GM12878 (cell line): ENCODE measurements at regions of chr12 and their contacts with region 1.

Region 1: GRCh38 chr12:89451841-89452251 is 72.8 kb downstream of the GALNT4 start:
- DNase-seq: no peak
- ATAC-seq: no peak
- H3K4me3 ChIP-seq: no peak overlapping the region
- H3K27ac ChIP-seq: no peak overlapping the region
- H3K4me1 ChIP-seq: no peaks in the 10 kb centered on the region
- H3K27me3 ChIP-seq: no peaks in the 10 kb centered on the region
- CTCF ChIP-seq: no peak
- EP300 ChIP-seq: no peak
- POLR2A ChIP-seq: no peak
- RAD21 ChIP-seq: no peak

Region 2: DNA sequence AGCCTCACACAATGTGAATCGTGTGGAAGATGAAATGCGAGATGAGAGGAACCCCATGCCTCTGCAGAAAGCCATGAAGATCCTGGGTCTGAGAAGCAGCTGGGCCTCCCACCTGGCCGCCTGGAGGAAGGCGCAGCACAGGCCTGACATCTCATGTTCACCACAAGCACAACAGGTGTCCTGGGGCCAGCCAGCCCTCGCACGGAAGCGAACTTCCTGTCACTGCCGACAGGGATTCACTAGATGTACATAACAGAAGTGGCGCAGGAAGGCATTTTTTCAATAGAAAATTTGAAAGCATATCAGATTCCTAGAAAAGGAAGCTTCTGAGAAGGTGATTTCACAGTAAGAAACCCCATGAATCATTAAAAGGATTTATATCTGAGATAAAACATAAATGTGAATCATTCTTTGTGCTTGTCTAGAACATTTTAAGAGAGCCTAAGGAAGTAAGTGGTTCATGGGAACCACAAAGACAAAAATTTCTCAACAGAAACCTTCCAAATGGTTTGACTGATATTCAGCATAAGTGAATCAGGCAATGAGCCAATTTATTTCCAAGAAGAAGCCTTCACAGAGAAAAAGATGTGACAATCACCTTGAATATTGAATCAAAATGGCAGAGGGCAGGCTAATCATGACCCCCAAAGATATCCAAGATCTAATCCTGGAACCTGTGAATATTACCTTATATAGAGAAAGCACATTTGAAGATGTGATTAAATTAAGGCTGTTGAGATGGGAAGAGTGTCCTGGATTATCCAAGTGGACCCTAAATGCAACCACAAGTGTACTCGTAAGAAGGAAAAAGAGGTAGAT is 411.5 kb before region 1 on chr12:
- CTCF ChIA-PET with region 1: no interaction called
- POLR2A ChIA-PET with region 1: no interaction called
- RAD21 ChIA-PET with region 1: no interaction called
- SMC1A ChIA-PET with region 1: no interaction called
- in situ Hi-C with region 1: loop called (anchors 10 kb)
- intact Hi-C with region 1: no loop called
- DNase-seq: no peak
- ATAC-seq: peak; percentile 67
- H3K4me3 ChIP-seq: no peak overlapping the region
- H3K27ac ChIP-seq: no peak overlapping the region
- H3K4me1 ChIP-seq: peaks cover 2% of the 10 kb centered on the region
- H3K27me3 ChIP-seq: 0 out of 4 replicates have a peak, but pooled peaks cover 0 to under 1% of the 10 kb centered on the region in 2 experiments
- CTCF ChIP-seq: peak in 1 of 3 experiments; percentile 7; a peak in 1 of 6 replicates
- EP300 ChIP-seq: no peak
- POLR2A ChIP-seq: no peak
- RAD21 ChIP-seq: peak; percentile 35; the same call in 1 of the 2 replicates